ENCODE measurements at regions of chr3 and their contacts with region 1.

Region 1: GRCh38 chr3:171736556-171736955 is 73.7 kb downstream of the PLD1 start:
- DNase-seq: no peak
- ATAC-seq: no peak
- H3K4me3 ChIP-seq: no peak overlapping the region
- H3K27ac ChIP-seq: no peak overlapping the region
- H3K4me1 ChIP-seq: peaks cover 0 to 31% (median 8%) of the 10 kb centered on the region in 12 donors
- H3K27me3 ChIP-seq: no peaks in the 10 kb centered on the region
- CTCF ChIP-seq: no peak
- POLR2A ChIP-seq: no peak

Region 2: GRCh38 chr3:171620825-171621434 is 115.6 kb before region 1 on chr3:
- intact Hi-C with region 1: no loop called
- DNase-seq: no peak
- ATAC-seq: no peak
- H3K4me3 ChIP-seq: no peak overlapping the region
- H3K27ac ChIP-seq: no peak overlapping the region
- H3K4me1 ChIP-seq: peaks cover 0 to 10% (median 0%) of the 10 kb centered on the region in 12 donors
- H3K27me3 ChIP-seq: no peaks in the 10 kb centered on the region
- CTCF ChIP-seq: no peak
- POLR2A ChIP-seq: no peak

Region 3: DNA sequence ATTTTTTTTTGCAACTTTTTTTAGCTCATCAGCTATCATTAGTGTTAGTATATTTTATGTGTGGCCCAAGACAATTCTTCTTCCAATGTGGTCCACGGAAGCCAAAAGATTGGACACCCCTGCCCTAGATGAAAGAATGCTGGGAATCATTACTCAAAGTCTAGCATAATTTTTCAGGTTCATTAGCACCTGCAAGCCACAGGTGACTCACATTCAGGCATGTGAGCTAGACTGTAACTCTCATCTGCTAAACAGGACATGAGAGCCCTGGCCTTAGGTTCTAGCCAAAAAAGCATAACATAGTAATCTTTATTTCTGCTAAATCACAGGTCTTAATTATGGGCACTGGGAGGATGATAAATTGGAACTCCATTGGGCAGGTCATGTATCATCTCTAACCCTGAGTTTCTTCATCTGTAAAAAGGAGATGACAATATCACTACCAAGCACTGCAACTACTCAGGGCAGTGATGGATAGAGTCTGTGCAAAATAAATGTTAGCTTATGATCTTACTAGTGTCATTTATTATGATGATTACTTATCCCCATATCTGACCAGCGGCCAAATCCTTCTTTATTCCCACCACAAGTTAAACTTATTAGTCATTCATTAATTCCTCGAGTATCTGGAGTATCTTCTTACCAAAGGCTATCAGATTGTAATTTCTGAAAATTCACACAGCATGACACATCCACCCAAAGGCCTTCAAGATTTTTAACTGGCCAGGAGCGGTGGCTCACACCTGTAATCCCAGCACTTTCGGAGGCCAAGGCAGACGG is 51.2 kb before region 1 on chr3:
- intact Hi-C with region 1: loop called in 1 of 10 experiments (anchors 5 kb)
- DNase-seq: no peak
- ATAC-seq: no peak
- H3K4me3 ChIP-seq: no peak overlapping the region
- H3K27ac ChIP-seq: no peak overlapping the region
- H3K4me1 ChIP-seq: peaks cover 0 to 24% (median 12%) of the 10 kb centered on the region in 12 donors
- H3K27me3 ChIP-seq: no peaks in the 10 kb centered on the region
- CTCF ChIP-seq: no peak
- POLR2A ChIP-seq: no peak